ENCODE measurements at regions of chr1 and their contacts with region 1.

Region 1: GRCh38 chr1:175023043-175023921 is at the start of gene MRPS14:
- DNase-seq: peak; percentile 99
- H3K4me3 Mint-ChIP-seq: peak within 1 kb of the TSS; percentile 94
- H3K27ac Mint-ChIP-seq: peak within 1 kb of the TSS; percentile 88
- H3K4me1 Mint-ChIP-seq: peaks cover 24% of the 10 kb centered on the region
- H3K27me3 Mint-ChIP-seq: no peaks in the 10 kb centered on the region
- total RNA-seq, gene MRPS14: 44.7 to 47.6 TPM

Region 2: DNA sequence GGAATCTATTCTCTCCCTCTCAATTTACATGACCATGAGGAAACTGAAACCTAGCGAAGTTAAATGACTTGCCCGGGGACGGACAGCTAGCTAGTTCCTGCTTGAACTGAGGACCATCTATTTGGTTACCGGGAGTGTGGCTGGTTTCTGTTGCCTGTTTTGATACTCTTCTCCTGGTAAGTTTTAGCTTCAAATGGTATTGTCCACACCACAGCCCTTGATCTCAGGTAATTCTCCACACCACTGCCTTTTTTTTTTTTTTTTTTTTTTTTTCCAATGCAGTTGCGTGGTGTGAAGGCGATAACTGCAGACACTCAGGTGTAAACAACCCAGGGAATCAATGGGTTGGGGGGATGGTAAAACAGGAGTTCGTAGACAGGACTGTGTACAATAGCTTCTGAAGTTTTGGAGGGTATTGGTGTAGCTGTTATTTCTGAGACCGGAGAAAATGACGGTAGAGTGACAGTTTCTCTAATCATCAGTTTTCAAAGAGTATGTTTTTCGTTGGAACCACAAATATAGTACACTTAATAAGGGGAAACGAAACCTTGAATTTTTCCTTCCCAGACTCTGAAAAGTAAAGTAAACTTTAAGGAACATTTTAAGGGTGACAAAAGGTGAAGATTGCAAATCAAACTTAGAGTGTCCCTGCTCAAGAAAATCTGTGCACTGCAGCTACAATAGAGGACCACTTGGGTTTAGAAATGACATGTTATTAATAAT is 148.8 kb before region 1 on chr1:
- CTCF ChIA-PET with region 1: no interaction called
- POLR2A ChIA-PET with region 1: no interaction called
- intact Hi-C with region 1: no loop called
- DNase-seq: peak; percentile 15
- H3K4me3 Mint-ChIP-seq: peak overlapping the region; percentile 54
- H3K27ac Mint-ChIP-seq: no peak overlapping the region
- H3K4me1 Mint-ChIP-seq: peaks cover 27% of the 10 kb centered on the region
- H3K27me3 Mint-ChIP-seq: no peaks in the 10 kb centered on the region

Region 3: GRCh38 chr1:175005085-175005783 is 18.0 kb before region 1 on chr1:
- CTCF ChIA-PET with region 1: interaction called, 9 read pairs
- POLR2A ChIA-PET with region 1: interaction called, 50 read pairs
- intact Hi-C with region 1: loop called (anchors 1 kb)
- DNase-seq: peak; percentile 42
- H3K4me3 Mint-ChIP-seq: no peak overlapping the region
- H3K27ac Mint-ChIP-seq: peak overlapping the region; percentile 65
- H3K4me1 Mint-ChIP-seq: peaks cover 51% of the 10 kb centered on the region
- H3K27me3 Mint-ChIP-seq: no peaks in the 10 kb centered on the region

Region 4: GRCh38 chr1:175075572-175076568 is 52.6 kb after region 1 on chr1:
- CTCF ChIA-PET with region 1: no interaction called
- POLR2A ChIA-PET with region 1: no interaction called
- intact Hi-C with region 1: loop called (anchors 2 kb)
- DNase-seq: no peak
- H3K4me3 Mint-ChIP-seq: no peak overlapping the region
- H3K27ac Mint-ChIP-seq: no peak overlapping the region
- H3K4me1 Mint-ChIP-seq: peaks cover 13% of the 10 kb centered on the region
- H3K27me3 Mint-ChIP-seq: peaks cover 20% of the 10 kb centered on the region

Region 5: GRCh38 chr1:175124861-175125260 is 101.6 kb after region 1 on chr1:
- CTCF ChIA-PET with region 1: interaction called, 120 read pairs
- POLR2A ChIA-PET with region 1: no interaction called
- intact Hi-C with region 1: no loop called
- DNase-seq: no peak
- H3K4me3 Mint-ChIP-seq: no peak overlapping the region
- H3K27ac Mint-ChIP-seq: no peak overlapping the region
- H3K4me1 Mint-ChIP-seq: no peaks in the 10 kb centered on the region
- H3K27me3 Mint-ChIP-seq: no peaks in the 10 kb centered on the region

Region 6: GRCh38 chr1:175174309-175175165 is 151.3 kb after region 1 on chr1:
- CTCF ChIA-PET with region 1: no interaction called
- POLR2A ChIA-PET with region 1: no interaction called
- intact Hi-C with region 1: no loop called
- DNase-seq: no peak
- H3K4me3 Mint-ChIP-seq: no peak overlapping the region
- H3K27ac Mint-ChIP-seq: no peak overlapping the region
- H3K4me1 Mint-ChIP-seq: peaks cover 60% of the 10 kb centered on the region
- H3K27me3 Mint-ChIP-seq: no peaks in the 10 kb centered on the region

Region 7: DNA sequence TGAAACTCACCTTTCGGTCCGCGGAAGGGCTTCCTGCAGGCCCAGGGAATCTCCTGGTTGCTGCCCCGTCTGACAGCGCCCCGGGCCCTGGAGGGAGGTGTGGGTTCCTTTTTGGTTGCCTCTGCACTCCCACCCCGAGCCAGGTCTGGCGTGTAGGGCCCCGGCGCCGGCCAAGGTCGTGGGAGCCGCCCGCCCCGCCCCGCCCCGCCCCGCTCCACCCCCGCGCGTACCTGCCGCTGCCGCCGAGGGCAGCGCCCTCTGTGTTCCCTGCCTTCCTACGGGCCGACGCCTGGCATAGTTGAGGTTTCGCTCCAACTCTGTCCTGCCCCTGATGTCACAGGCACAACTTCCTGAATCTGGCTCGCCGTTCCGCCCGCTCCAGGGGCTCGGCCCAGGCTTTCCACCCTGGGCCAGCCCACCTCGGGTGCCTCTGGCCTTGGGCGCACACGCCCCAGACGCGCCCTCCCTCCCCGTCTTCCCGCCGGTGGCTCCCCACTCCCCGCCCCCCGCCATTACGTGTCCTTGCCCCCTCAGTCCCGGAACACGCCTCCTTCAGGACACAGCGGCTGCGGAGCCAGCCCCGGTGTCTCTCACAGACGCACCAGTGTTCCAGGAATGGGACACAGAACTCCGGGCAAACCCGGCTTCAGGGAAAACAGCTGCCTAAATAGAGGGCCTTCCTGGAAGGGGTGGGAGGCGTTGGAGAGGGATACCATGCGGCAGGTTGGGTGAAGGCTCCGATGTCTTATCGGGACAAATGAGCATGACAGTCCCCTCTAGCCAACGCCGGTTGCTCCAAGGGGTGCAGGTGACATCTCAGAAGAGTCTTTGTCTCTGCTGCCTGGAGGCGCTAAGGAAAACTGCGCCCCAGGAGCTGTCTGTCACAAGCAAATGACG is 169.6 kb after region 1 on chr1 and contains the start of gene KIAA0040:
- CTCF ChIA-PET with region 1: no interaction called
- POLR2A ChIA-PET with region 1: interaction called, 3 read pairs
- intact Hi-C with region 1: loop called (anchors 1 kb)
- DNase-seq: peak; percentile 71
- H3K4me3 Mint-ChIP-seq: peak within 1 kb of the TSS; percentile 95
- H3K27ac Mint-ChIP-seq: peak within 1 kb of the TSS; percentile 93
- H3K4me1 Mint-ChIP-seq: peaks cover 48% of the 10 kb centered on the region
- H3K27me3 Mint-ChIP-seq: no peaks in the 10 kb centered on the region
- total RNA-seq, gene KIAA0040: 32.9 to 34.5 TPM

Region 8: DNA sequence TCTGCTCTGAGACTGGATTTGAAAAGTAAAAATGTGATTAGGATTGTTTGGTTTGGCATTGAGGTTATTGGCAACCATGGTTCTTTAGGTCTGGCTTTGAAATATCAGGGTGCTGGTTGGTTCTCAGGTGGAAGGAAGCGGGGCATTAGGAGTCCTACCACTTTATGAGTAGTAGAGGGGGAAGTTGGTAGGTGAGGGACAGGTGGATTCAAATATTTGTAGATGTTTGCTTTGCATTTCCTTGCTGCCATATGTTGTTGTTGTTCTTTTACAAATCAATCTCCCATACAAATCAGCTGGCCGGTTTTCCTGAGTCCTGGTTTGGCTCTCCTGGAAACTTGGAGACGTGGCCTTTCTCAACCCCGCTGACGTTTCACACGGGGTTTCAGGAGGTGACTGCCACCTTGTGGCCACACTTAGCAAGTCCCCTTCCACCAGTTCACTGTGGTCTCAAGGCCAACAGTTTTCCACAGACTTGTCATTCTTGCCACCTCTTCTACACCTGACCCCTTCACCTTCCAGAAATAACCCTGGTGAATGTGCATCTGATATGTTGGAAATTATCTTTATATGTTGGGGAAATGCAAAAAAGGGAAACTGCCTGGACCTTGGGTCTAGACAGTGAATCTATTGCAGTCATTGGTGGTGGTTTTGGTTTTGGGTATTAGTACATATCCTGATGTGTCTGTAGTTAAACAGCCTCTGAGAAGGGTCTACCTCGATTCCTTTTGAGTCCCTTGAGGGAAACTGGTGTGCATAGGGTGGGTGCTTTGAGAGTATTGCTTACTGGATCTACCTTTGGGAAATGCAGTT is 296.3 kb after region 1 on chr1:
- CTCF ChIA-PET with region 1: no interaction called
- POLR2A ChIA-PET with region 1: no interaction called
- intact Hi-C with region 1: loop called (anchors 2 kb)
- DNase-seq: peak; percentile 76
- H3K4me3 Mint-ChIP-seq: no peak overlapping the region
- H3K27ac Mint-ChIP-seq: no peak overlapping the region
- H3K4me1 Mint-ChIP-seq: peaks cover 14% of the 10 kb centered on the region
- H3K27me3 Mint-ChIP-seq: no peaks in the 10 kb centered on the region

Measured in activated CD4-positive, alpha-beta memory T cell treated with anti-CD3 and anti-CD28 coated beads for 36 hours (primary cell).